ENCODE measurements at regions of chr4 and their contacts with region 1.

Region 1: GRCh38 chr4:109574102-109574850 is 14.2 kb downstream of the MCUB start:
- DNase-seq: peak; percentile 40
- H3K4me3 ChIP-seq: no peak overlapping the region
- H3K27ac ChIP-seq: no peak overlapping the region
- H3K4me1 ChIP-seq: peaks cover 19% of the 10 kb centered on the region
- H3K27me3 ChIP-seq: no peaks in the 10 kb centered on the region
- CTCF ChIP-seq: peak in 1 of 2 donors; percentile 2
- POLR2A ChIP-seq: no peak

Region 2: DNA sequence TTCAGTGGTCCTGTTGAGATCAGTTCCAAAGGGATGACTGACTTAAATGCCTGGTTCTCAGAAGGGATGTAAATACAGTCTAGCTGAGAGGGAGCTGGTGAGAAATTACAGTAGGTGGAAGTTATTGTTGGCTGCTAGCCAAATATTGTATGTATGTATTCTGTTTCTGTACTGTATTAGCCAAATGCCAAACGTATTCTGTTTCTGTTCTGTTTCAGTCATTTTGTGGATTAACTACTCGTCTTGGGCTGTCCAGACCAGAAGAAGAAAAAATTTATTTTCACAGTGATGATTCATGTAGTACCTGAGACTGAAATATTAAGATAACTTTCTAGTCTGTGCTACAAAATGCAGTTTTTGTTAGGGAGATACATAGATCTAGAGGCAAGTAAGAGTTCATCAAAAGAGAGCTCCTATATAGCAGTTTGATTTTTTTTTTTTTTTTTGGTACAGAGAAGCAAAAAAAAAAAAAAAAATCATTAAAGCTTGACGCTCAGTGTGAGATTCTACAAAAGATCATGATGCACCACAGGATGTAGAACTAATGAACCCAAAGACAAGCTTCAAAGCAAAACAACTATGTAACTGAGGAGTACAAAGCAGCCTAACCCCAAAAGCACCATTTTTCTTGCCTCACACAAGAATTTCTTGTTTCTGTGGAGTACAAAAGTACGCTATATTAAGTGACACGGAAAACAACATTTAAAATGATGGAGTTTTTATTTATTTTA is 74.2 kb after region 1 on chr4:
- CTCF ChIA-PET with region 1: interaction called, 4 read pairs
- POLR2A ChIA-PET with region 1: no interaction called
- dilution Hi-C with region 1: no loop called
- intact Hi-C with region 1: loop called (anchors 1 kb)
- DNase-seq: peak; percentile 93
- H3K4me3 ChIP-seq: peak overlapping the region in 1 of 3 experiments; percentile 38
- H3K27ac ChIP-seq: peak overlapping the region; percentile 14
- H3K4me1 ChIP-seq: peaks cover 11% of the 10 kb centered on the region
- H3K27me3 ChIP-seq: no peaks in the 10 kb centered on the region
- CTCF ChIP-seq: no peak
- POLR2A ChIP-seq: no peak

Region 3: GRCh38 chr4:109702950-109703663 is 128.8 kb after region 1 on chr4 and contains the start of gene CASP6:
- CTCF ChIA-PET with region 1: interaction called, 3 read pairs
- POLR2A ChIA-PET with region 1: no interaction called
- dilution Hi-C with region 1: no loop called
- intact Hi-C with region 1: loop called (anchors 1 kb)
- DNase-seq: peak; percentile 80
- H3K4me3 ChIP-seq: peak within 1 kb of the TSS; percentile 81 to 93 (median 83)
- H3K27ac ChIP-seq: peak within 1 kb of the TSS; percentile 72
- H3K4me1 ChIP-seq: peaks cover 14% of the 10 kb centered on the region
- H3K27me3 ChIP-seq: no peaks in the 10 kb centered on the region
- CTCF ChIP-seq: peak; percentile 69 to 81
- POLR2A ChIP-seq: peak; percentile 67
- total RNA-seq, gene CASP6: 35.4 and 37.0 TPM in 2 replicates

Region 4: GRCh38 chr4:109977854-109978501 is 403.7 kb after region 1 on chr4:
- CTCF ChIA-PET with region 1: interaction called, 3 read pairs
- POLR2A ChIA-PET with region 1: no interaction called
- dilution Hi-C with region 1: no loop called
- intact Hi-C with region 1: loop called (anchors 10 kb)
- DNase-seq: peak; percentile 51
- H3K4me3 ChIP-seq: no peak overlapping the region
- H3K27ac ChIP-seq: no peak overlapping the region
- H3K4me1 ChIP-seq: no peaks in the 10 kb centered on the region
- H3K27me3 ChIP-seq: peaks cover 17 to 20% of the 10 kb centered on the region in 2 experiments
- CTCF ChIP-seq: peak; percentile 34 to 43
- POLR2A ChIP-seq: no peak

Measured in endothelial cell of umbilical vein (primary cell).